Astrocyte of the cerebellum (primary cell): ENCODE measurements at regions of chr14 and their contacts with region 1.

Region 1: DNA sequence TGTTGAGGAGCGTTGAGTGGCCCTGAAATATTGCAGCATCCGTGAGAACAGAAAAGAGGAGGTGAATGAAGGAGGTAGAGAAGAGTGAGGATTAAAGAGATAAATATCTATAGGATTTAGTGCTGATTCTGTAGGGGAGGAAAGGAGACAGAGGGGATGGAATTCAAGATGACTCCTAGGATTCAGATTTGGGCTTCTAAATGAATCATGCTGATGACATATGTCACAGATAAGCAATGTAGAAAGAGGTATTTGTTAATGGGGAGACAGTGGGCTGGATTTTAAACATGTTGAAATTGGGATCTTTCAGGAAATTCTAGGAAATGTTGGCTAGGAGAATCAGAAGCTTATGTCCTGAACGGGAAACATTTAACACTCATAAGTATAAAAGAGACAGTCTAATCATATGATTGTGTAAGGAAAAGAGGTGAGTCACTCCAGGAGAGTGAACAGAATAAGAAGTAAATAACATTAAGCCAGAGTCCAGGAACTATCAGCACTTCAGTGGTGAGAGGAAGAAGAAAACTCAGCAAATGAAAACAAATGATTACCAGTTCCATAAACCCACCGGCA is 58.1 kb upstream of the DIO2 start:
- DNase-seq: no peak
- H3K4me3 ChIP-seq: no peak overlapping the region
- CTCF ChIP-seq: no peak

Region 2: GRCh38 chr14:80202888-80203562 is 66.4 kb before region 1 on chr14:
- in situ Hi-C with region 1: loop called (anchors 5 kb)
- DNase-seq: no peak
- H3K4me3 ChIP-seq: no peak overlapping the region
- CTCF ChIP-seq: peak; percentile 18

Region 3: DNA sequence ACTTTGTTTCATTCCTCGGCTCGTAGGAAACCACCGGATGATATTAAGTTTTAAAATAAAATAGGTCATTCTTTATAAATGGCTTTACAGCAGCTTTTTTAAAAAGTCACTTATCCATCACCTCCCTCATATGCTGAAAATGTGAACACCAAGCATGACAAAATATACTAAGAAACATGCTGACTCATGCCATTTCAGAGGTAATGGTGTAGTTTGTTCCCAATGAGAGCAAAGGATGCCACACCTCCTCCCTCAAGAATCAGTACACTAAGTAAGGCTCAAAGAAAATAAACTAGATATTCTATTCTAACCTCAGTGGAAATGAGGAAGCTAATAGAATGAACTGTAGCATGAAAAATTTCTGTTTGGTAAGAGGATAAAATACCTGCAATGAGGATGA is 52.6 kb before region 1 on chr14:
- in situ Hi-C with region 1: no loop called
- DNase-seq: no peak
- H3K4me3 ChIP-seq: no peak overlapping the region
- CTCF ChIP-seq: no peak